Naive thymus-derived CD4-positive, alpha-beta T cell (primary cell): ENCODE measurements at regions of chr2 and their contacts with region 1.

Region 1: DNA sequence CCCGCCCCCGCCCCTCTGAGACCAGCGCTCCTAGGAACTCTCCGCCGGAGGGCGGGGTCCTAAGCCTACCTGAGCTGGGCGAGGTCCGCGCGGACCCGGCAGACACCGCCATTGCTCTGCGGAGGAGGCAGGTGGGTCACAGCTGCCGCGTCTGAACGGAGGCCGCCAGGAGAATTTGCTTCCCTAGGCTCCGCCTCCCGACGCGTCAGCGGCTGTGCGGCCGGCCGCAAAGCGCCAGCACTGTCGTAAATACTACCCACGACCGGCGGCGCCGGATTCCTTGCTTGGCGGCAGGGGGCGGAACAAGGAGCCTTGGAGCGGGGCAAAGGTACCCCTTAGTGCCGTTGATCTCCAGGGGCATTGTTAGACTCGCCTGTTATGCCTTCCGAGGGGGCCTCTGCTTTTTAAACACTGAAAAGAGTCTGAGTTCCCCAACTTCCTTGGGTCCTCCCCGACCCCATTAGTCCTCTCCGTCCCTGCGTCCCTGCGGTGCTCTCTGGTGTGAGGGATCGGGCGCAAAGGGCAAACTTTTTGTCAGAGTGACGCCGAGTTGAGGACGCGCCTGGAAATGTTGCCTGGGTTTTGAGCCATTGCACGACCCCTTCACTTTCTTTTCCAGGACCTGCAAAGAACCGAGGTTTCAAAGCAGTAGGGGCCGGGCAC is at the start of gene GGCX:
- DNase-seq: peak; percentile 77 to 92 (median 88)
- ATAC-seq: peak; percentile 98
- H3K4me3 ChIP-seq: peak within 1 kb of the TSS; percentile 98
- H3K4me3 Mint-ChIP-seq: peak within 1 kb of the TSS; percentile 81 to 99 (median 97)
- H3K27ac ChIP-seq: peak within 1 kb of the TSS; percentile 95
- H3K27ac Mint-ChIP-seq: peak within 1 kb of the TSS; percentile 86 to 99 (median 95)
- H3K4me1 ChIP-seq: peaks cover 6 to 8% of the 10 kb centered on the region in 2 donors
- H3K4me1 Mint-ChIP-seq: peaks cover 17 to 48% (median 32%) of the 10 kb centered on the region in 7 donors
- H3K27me3 ChIP-seq: no peaks in the 10 kb centered on the region
- H3K27me3 Mint-ChIP-seq: no peaks in the 10 kb centered on the region
- total RNA-seq, gene GGCX: 20.4 to 34.2 (median 26.3) TPM

Region 2: GRCh38 chr2:85511008-85511811 is 50.2 kb before region 1 on chr2:
- CTCF ChIA-PET with region 1: no interaction called
- POLR2A ChIA-PET with region 1: no interaction called
- intact Hi-C with region 1: no loop called
- DNase-seq: no peak
- ATAC-seq: no peak
- H3K4me3 ChIP-seq: no peak overlapping the region
- H3K4me3 Mint-ChIP-seq: no peak overlapping the region
- H3K27ac ChIP-seq: no peak overlapping the region
- H3K27ac Mint-ChIP-seq: no peak overlapping the region
- H3K4me1 ChIP-seq: no peaks in the 10 kb centered on the region
- H3K4me1 Mint-ChIP-seq: no peaks in the 10 kb centered on the region
- H3K27me3 ChIP-seq: no peaks in the 10 kb centered on the region
- H3K27me3 Mint-ChIP-seq: peaks cover 0 to 3% (median 0%) of the 10 kb centered on the region in 5 donors

Region 3: GRCh38 chr2:85577386-85578242 is 16.2 kb after region 1 on chr2 and contains the start of gene VAMP8:
- CTCF ChIA-PET with region 1: no interaction called
- POLR2A ChIA-PET with region 1: interaction called, 16 read pairs
- intact Hi-C with region 1: loop called (anchors 1 kb)
- DNase-seq: peak in 8 of 9 donors; percentile 43 to 61 (median 46)
- ATAC-seq: peak; percentile 82
- H3K4me3 ChIP-seq: peak within 1 kb of the TSS; percentile 78
- H3K4me3 Mint-ChIP-seq: peak within 1 kb of the TSS; percentile 89 to 96 (median 92)
- H3K27ac ChIP-seq: peak within 1 kb of the TSS; percentile 86
- H3K27ac Mint-ChIP-seq: peak within 1 kb of the TSS; percentile 74 to 99 (median 94)
- H3K4me1 ChIP-seq: peaks cover 12 to 28% of the 10 kb centered on the region in 2 donors
- H3K4me1 Mint-ChIP-seq: peaks cover 28 to 47% (median 39%) of the 10 kb centered on the region in 7 donors
- H3K27me3 ChIP-seq: no peaks in the 10 kb centered on the region
- H3K27me3 Mint-ChIP-seq: peaks cover 0 to 2% (median 0%) of the 10 kb centered on the region in 5 donors
- total RNA-seq, gene VAMP8: 55.1 to 137 (median 83.2) TPM

Region 4: GRCh38 chr2:85584857-85585783 is 23.7 kb after region 1 on chr2:
- CTCF ChIA-PET with region 1: interaction called, 3 read pairs
- POLR2A ChIA-PET with region 1: interaction called, 16 read pairs
- intact Hi-C with region 1: no loop called
- DNase-seq: peak in 4 of 9 donors; percentile 22 to 40 (median 30)
- ATAC-seq: peak; percentile 47
- H3K4me3 ChIP-seq: peak overlapping the region; percentile 69
- H3K4me3 Mint-ChIP-seq: peak overlapping the region; percentile 79 to 96 (median 88)
- H3K27ac ChIP-seq: peak overlapping the region; percentile 80
- H3K27ac Mint-ChIP-seq: peak overlapping the region; percentile 81 to 93 (median 93)
- H3K4me1 ChIP-seq: peaks cover 19 to 35% of the 10 kb centered on the region in 2 donors
- H3K4me1 Mint-ChIP-seq: peaks cover 47 to 73% (median 65%) of the 10 kb centered on the region in 7 donors
- H3K27me3 ChIP-seq: no peaks in the 10 kb centered on the region
- H3K27me3 Mint-ChIP-seq: no peaks in the 10 kb centered on the region

Region 5: DNA sequence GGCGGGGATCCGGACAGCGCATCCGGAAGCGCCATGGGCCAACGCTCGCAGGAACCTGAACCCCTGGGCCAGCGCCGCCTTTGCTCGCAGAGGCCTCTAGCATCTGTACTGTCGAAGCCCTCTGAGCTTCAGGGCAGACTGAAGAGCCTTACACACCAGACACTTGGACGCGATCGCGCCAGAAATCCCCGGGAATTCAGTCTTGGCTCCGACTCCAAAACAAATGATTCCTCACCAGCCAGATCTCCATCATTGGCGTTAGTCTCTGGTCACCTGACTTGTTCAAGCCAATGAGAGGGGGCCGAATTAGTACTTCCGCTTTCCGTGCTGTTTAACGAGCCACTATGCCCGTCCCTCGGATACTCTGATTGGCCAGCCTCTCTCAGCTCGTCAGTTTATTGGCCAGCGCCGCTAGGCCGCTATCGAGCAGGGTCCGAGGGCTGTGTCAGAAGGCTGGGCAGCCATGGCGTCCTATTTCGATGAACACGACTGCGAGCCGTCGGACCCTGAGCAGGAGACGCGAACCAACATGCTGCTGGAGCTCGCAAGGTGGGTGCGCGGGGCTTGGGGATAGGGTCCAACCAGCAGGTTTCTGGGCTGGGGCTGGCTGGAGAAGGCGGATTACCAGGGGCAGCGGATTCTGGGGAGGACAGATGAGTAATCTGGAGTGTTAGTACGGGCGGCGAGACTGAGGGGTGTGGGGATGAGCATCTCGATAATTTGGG is 34.0 kb after region 1 on chr2 and contains the start of gene RNF181:
- CTCF ChIA-PET with region 1: no interaction called
- POLR2A ChIA-PET with region 1: interaction called, 27 read pairs
- intact Hi-C with region 1: loop called (anchors 1 kb)
- DNase-seq: peak; percentile 65 to 95 (median 90)
- ATAC-seq: peak; percentile 99
- H3K4me3 ChIP-seq: peak within 1 kb of the TSS; percentile 89
- H3K4me3 Mint-ChIP-seq: peak within 1 kb of the TSS; percentile 93 to 100 (median 98)
- H3K27ac ChIP-seq: peak within 1 kb of the TSS; percentile 88
- H3K27ac Mint-ChIP-seq: peak within 1 kb of the TSS; percentile 93 to 99 (median 97)
- H3K4me1 ChIP-seq: peaks cover 15 to 16% of the 10 kb centered on the region in 2 donors
- H3K4me1 Mint-ChIP-seq: peaks cover 25 to 48% (median 35%) of the 10 kb centered on the region in 7 donors
- H3K27me3 ChIP-seq: no peaks in the 10 kb centered on the region
- H3K27me3 Mint-ChIP-seq: no peaks in the 10 kb centered on the region
- total RNA-seq, gene RNF181: 38.5 to 118 (median 61.4) TPM

Region 6: DNA sequence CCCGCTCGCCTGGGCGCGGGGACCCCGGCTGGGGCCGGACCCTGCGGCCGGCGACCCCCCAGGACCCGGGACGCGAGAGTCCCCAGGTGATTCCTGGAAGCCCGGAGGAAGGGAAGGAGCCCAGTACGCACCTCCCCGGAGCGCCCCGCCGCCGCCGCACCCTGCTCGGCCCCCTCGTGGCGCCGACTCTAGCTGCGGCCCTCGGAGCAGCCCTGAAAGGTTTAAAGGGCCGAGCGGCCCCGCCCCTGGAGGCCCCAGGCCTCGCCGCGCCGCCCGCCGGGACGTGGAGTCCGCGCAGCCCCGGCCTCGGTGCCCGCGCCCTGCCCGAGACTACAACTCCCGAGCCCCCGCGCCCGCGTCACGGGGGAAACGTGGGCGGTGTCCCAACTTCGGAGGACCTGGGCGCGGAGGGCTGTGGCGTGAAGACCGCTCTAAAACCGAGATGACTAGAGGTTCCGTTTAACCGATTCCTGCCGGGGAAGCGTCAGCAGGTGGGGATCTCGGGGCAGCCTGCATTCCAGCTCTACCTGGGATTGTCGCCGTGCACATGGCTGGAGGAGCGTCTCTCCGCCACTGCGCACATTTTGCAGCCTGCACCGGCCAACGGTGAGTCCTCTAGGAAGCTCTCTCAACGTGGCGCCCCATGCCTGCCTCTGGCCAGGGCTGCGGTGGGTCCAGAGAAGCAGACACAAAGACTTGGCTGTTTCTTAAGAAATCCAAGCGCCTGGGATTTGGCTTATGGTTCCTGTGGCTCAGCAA is 41.2 kb after region 1 on chr2 and contains the start of gene TMEM150A:
- CTCF ChIA-PET with region 1: interaction called, 3 read pairs
- POLR2A ChIA-PET with region 1: interaction called, 6 read pairs
- intact Hi-C with region 1: loop called in 1 of 2 experiments (anchors 1 kb)
- DNase-seq: peak; percentile 68 to 91 (median 78)
- ATAC-seq: peak; percentile 97
- H3K4me3 ChIP-seq: peak within 1 kb of the TSS; percentile 99
- H3K4me3 Mint-ChIP-seq: peak within 1 kb of the TSS; percentile 89 to 98 (median 91)
- H3K27ac ChIP-seq: peak within 1 kb of the TSS; percentile 81
- H3K27ac Mint-ChIP-seq: peak within 1 kb of the TSS; percentile 42 to 96 (median 82)
- H3K4me1 ChIP-seq: peaks cover 7 to 9% of the 10 kb centered on the region in 2 donors
- H3K4me1 Mint-ChIP-seq: peaks cover 16 to 45% (median 37%) of the 10 kb centered on the region in 7 donors
- H3K27me3 ChIP-seq: no peaks in the 10 kb centered on the region
- H3K27me3 Mint-ChIP-seq: peaks cover 0 to 2% (median 0%) of the 10 kb centered on the region in 5 donors
- total RNA-seq, gene TMEM150A: 5.1 to 17.8 (median 11.2) TPM

Region 7: DNA sequence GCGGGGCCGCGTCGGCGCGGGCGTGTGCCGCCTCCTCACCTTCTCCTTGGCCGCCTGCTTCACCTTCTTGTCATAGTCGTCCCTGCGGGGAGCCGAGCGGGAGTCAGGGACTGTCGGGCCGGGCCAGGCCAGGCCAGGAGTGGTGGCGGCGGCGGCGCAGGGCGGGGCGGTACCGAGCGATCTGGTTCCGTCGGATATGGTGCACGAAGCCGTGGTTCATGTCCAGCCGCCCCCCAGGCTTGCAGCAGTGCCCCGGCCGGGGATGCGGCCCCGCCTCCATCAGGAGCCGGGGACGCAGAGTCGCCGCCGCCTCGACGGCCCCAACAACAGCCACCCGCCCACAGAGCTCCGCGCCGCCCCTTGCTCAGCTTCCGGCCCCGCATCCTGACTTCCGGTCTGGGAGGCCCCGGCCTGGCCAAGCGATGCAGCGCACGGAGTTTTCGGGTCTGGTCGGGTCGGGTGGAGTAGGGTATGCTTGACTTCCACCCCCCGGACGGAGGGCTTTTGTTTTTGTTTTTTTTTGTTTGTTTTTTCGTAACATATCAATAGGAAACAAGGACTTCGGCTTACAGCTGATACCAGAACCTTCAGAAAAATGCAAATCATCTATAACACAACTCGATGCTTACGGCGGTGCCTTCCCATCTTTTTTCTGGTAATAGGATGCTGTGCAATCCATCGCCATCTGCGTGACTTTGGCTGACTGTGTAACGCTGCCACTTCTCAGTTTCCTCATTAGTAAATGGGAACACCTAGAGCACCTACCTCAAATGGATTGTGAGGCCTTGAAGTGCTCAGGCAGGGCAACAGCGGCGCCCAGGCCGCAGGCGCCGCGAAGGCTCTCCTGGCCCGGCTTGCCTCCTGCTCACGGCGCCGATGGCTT is 50.5 kb after region 1 on chr2 and contains the start of gene C2orf68:
- CTCF ChIA-PET with region 1: no interaction called
- POLR2A ChIA-PET with region 1: interaction called, 6 read pairs
- intact Hi-C with region 1: loop called (anchors 1 to 2 kb)
- DNase-seq: peak; percentile 61 to 92 (median 75)
- ATAC-seq: peak; percentile 76
- H3K4me3 ChIP-seq: peak within 1 kb of the TSS; percentile 65
- H3K4me3 Mint-ChIP-seq: peak within 1 kb of the TSS; percentile 96 to 100 (median 98)
- H3K27ac ChIP-seq: peak within 1 kb of the TSS; percentile 81
- H3K27ac Mint-ChIP-seq: peak within 1 kb of the TSS; percentile 86 to 99 (median 96)
- H3K4me1 ChIP-seq: peaks cover 11 to 16% of the 10 kb centered on the region in 2 donors
- H3K4me1 Mint-ChIP-seq: peaks cover 14 to 52% (median 44%) of the 10 kb centered on the region in 7 donors
- H3K27me3 ChIP-seq: no peaks in the 10 kb centered on the region
- H3K27me3 Mint-ChIP-seq: no peaks in the 10 kb centered on the region
- total RNA-seq, gene C2orf68: 40.9 to 92.1 (median 51.6) TPM

Region 8: DNA sequence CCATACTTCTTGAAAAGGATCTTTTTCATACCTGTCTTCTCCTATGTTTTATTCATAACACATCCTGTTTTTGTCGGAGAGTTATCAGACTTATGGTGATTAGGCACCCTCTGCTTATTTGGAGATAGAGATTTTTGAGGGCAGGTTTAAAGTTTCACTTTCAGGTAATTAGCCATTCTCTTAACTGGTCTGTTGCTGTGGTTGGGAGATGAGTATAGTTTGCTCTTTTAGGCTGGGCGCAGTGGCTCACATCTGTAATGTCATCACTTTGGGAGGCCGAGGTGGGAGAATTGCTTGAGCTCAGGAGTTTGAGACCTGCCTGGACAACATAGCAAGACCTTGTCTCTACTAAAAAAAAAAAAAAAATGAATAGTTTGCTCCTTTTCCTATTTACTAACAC is 81.3 kb after region 1 on chr2:
- CTCF ChIA-PET with region 1: interaction called, 3 read pairs
- POLR2A ChIA-PET with region 1: no interaction called
- intact Hi-C with region 1: loop called in 1 of 2 experiments (anchors 1 kb)
- DNase-seq: no peak
- ATAC-seq: no peak
- H3K4me3 ChIP-seq: no peak overlapping the region
- H3K4me3 Mint-ChIP-seq: no peak overlapping the region
- H3K27ac ChIP-seq: no peak overlapping the region
- H3K27ac Mint-ChIP-seq: peak overlapping the region in 2 of 9 donors; percentile 30 to 45
- H3K4me1 ChIP-seq: no peaks in the 10 kb centered on the region
- H3K4me1 Mint-ChIP-seq: peaks cover 0 to 21% (median 0%) of the 10 kb centered on the region in 7 donors
- H3K27me3 ChIP-seq: no peaks in the 10 kb centered on the region
- H3K27me3 Mint-ChIP-seq: no peaks in the 10 kb centered on the region

Region 9: DNA sequence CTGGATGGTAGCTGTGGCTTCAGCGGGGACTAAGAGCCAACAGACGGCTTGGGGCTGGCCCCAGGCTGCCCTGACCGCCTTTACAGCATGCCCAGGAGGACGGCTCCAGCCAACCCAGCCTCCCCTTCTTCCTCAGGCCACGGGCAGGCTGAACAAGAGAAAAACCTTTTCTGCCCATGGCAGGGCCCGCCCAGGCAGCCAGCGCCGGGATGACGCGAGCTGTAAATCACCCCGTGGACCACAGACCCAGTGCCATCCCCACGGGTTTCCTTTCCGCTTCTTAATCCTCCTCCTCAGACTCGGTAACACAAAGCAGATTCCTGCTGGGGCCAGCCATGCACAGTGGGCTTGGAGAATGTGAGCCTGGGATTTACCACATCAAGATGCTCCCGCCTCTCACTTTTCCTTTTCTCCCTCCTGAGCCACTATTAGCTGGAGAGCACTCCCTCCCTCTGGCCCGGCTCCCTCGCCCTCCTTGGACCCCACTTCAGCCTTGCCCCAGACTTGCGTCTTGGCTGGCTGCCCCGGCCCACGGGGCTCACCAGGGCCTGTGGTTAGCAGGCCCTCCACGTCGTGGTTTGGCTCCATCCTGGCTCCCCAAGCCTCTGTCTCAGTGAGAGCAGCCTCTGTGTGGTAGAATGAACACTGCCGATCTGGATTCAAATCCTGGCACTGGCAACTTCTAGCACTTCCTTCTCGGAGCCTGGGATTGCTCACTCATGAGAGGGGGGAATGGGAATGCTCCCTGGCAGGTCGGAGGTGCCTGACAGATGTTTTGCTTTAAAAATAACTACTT is 223.8 kb after region 1 on chr2:
- CTCF ChIA-PET with region 1: no interaction called
- POLR2A ChIA-PET with region 1: no interaction called
- intact Hi-C with region 1: no loop called
- DNase-seq: no peak
- ATAC-seq: peak; percentile 64
- H3K4me3 ChIP-seq: no peak overlapping the region
- H3K4me3 Mint-ChIP-seq: no peak overlapping the region
- H3K27ac ChIP-seq: no peak overlapping the region
- H3K27ac Mint-ChIP-seq: no peak overlapping the region
- H3K4me1 ChIP-seq: no peaks in the 10 kb centered on the region
- H3K4me1 Mint-ChIP-seq: peaks cover 0 to 8% (median 2%) of the 10 kb centered on the region in 7 donors
- H3K27me3 ChIP-seq: no peaks in the 10 kb centered on the region
- H3K27me3 Mint-ChIP-seq: peaks cover 0 to 21% (median 5%) of the 10 kb centered on the region in 5 donors